ENCODE measurements at regions of chr10 and their contacts with region 1.

Region 1: DNA sequence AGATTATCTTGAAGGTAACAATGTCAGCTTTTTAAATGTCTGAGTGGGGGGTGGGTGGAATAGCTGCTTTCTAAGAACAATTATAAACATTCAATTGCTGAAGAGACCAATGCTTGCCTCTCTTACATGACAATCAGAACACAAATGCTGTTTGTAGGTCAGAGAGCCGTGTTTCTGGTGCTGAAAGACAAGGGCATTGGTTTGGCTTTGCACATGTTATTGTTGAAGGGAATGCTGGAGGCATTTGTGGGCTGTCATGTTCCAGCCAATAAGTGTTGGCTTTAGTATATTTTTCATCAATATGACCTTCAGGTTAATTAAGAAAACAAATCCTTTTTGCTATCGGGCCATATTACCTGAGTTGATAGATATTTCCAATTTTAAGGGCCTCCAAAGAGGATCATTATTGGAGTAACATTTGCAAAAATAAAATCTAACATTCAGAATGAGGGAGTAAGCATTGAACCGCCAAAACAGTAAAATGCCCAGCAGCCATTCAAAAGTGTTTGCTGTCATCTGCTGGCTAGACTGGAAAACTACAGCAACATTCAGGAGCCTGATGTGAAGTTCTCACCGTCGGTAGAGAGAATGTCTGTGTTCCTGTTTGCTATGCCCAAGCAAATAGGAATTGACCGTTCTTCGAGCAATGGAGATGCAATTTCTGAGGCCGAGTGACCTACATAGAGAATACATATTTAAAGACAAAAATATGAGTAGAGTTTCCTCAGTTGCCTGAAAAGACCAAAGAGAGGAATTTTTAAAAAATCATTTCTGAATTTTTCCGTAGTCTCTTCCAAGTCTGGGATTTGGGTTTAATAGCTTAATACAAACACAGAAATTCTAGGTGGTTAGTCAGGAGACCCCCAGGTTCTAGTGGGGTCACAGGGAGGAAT is 118.9 kb downstream of the APBB1IP start:
- DNase-seq: no peak
- ATAC-seq: peak; percentile 87

Region 2: GRCh38 chr10:25875556-25876165 is 681.3 kb before region 1 on chr10:
- intact Hi-C with region 1: loop called (anchors 5 kb)
- DNase-seq: peak; percentile 47
- ATAC-seq: no peak

Region 3: DNA sequence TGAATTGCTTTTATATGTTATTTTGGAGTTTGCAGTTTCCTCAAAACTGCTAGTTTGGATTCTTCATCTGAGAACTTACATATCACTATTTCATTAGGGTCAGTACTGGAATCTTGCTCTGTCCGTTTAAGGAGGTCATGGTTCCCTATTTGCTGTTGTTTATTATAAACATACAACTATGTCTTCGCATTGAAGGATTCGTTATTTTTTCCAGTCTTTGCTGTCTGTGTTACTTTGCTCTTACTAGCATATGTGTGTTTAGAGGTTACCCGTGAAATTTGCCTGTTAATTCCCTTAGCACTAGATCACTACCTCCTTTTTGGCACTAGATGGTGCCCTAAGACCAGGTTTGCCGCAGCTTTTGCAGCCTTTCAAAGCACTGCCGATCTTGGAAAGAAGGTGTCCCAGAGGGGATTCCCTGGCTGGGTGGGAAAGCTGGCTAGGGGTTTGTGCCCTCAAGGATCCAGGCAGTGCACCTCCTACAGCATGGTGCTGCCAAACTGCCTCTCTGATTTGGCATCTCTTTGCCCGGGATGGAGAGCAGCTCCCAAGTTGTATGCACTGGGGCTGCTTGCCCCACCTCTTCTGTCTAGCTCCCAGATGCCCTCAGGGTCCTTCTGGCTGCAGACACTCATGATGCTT is 221.9 kb before region 1 on chr10:
- intact Hi-C with region 1: loop called (anchors 2 kb)
- DNase-seq: no peak
- ATAC-seq: peak; percentile 81

Region 4: DNA sequence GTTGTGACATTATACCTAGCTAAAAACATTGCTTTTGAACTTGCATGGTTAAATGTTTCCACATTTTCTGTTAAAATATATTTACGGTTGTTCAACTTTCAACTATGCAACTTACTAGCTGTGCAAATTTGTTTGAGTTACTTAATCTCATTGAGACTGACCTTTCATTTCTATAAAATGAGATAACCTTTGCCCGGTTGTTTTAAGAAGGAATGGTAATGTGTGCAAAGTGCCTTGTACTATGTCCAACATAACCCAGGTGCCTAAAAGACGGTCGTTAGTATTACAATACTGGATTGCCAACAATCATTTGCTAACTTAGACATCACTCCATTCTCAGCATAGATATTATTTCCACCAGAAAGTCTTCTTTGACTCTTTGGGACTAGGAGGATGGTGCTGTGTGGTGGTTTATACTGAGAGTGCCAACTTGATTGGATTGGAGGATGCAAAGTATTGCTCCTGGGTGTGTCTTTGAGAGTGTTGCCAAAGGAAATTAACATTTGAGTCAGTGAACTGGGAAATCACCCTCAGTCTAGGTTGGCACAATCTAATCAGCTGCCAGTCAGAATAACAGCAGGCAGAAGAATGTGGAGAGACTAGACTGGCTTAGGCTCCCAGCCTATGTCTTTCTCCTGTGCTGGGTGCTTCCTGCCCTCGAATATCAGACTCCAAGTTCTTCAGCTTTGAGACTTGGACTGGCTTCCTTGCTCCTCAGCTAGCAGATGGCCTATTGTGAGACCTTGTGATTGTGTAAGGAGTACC is 55.3 kb after region 1 on chr10:
- intact Hi-C with region 1: no loop called
- DNase-seq: no peak
- ATAC-seq: no peak